Adrenal gland (tissue), 19 donors: ENCODE measurements at regions of chr20 and their contacts with region 1.

Region 1: DNA sequence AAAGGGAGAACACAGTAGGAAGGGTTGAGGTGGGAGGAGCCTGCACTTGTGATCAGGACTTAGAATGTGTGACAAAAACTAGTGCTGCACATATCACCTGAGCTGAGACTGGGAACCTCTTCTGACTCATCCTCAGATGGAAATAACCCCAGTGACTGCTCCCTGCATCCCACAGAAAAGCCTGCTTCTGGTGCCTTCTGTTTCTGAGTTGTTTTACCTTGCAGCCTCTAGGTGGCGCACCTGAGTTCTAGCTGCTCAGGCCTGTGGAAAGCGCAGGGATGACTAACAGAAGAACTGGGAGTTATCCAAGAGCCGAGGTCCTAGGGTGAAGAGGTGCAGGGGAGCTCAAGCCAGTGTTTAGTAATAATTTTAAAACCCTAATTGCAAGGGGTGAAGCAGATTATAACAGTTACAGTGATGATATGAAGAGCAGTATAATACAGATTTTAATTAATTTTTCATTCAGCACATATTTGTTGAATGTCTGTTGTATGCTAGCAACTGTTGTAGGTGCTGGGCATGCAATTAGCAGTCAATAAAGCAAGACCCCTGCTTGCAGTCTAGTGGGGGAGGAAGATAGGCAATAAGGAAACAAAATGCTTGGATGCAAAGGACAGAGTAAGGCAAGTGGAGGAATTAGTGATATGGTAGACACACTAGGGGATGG is 302.5 kb downstream of the DHX35 start:
- DNase-seq: peak; percentile 68 to 90 (median 82)
- H3K4me3 ChIP-seq: no peak overlapping the region
- H3K27ac ChIP-seq: no peak overlapping the region
- H3K4me1 ChIP-seq: peaks cover 0 to 4% of the 10 kb centered on the region in 2 donors
- H3K27me3 ChIP-seq: no peaks in the 10 kb centered on the region
- CTCF ChIP-seq: peak; percentile 68 to 92 (median 86)
- POLR2A ChIP-seq: no peak

Region 2: GRCh38 chr20:39112178-39112743 is 152.4 kb before region 1 on chr20:
- intact Hi-C with region 1: loop called in 1 of 2 experiments (anchors 5 kb)
- DNase-seq: peak; percentile 38 to 88 (median 63)
- H3K4me3 ChIP-seq: no peak overlapping the region
- H3K27ac ChIP-seq: no peak overlapping the region
- H3K4me1 ChIP-seq: peaks cover 6 to 8% of the 10 kb centered on the region in 2 donors
- H3K27me3 ChIP-seq: peaks cover 3% of the 10 kb centered on the region
- CTCF ChIP-seq: peak; percentile 39 to 83 (median 66)
- POLR2A ChIP-seq: no peak

Region 3: DNA sequence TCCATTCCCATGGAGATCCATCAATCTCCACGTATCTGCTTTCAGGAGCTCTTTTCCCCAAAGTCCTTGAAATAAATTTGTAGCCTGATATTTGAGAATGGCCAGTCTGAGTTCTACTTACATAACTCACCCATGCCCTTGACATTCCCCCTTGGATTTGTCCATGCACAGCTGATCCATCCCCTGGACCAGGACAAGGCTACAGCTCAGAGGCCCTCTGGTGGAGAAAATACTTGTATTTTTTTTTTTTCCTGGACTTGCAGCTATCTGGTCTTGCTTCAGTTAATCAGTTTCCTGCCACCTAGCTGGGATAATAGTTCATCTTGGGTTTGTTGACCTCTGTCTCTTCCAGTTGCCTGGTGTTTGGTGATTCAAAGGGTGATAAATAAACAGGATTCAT is 165.1 kb after region 1 on chr20:
- intact Hi-C with region 1: loop called in 1 of 2 experiments (anchors 5 kb)
- DNase-seq: peak; percentile 21 to 62 (median 42)
- H3K4me3 ChIP-seq: no peak overlapping the region
- H3K27ac ChIP-seq: no peak overlapping the region
- H3K4me1 ChIP-seq: no peaks in the 10 kb centered on the region
- H3K27me3 ChIP-seq: no peaks in the 10 kb centered on the region
- CTCF ChIP-seq: peak; percentile 30 to 62 (median 52)
- POLR2A ChIP-seq: no peak